Testis (tissue), 5 donors: ENCODE measurements at regions of chr18 and their contacts with region 1.

Region 1: DNA sequence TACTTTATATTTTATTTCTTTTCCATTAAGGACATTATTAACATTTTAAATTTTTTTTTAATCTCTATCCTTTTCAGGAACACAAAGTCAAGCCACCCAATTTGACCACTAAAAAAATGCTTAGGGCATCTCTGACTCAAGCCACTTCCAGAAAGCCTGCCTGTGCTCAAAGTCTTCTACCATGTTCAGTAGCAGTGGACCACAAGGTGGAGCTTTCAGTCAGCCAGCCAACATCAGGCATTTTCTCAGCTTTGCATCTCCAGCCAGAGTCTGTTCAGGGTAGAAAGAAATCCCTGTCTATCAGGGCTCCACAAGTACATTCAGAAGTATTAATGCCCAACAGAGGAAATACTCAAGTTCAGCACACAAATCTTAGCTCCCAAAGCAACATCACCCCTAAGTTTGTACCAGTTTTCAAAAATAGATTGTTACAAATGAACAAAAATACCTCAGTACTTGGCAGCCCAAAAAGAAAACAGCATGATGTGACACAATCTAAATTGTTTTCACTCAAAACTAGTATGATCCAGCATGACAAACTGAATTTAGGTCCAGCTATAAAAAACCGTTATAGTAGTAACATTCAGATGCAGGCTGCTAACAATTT is 37.6 kb downstream of the C18orf63 start:
- DNase-seq: peak; percentile 87
- H3K4me3 ChIP-seq: no peak overlapping the region
- H3K27ac ChIP-seq: no peak overlapping the region
- H3K4me1 ChIP-seq: no peaks in the 10 kb centered on the region
- H3K27me3 ChIP-seq: no peaks in the 10 kb centered on the region
- CTCF ChIP-seq: peak; percentile 46 to 73 (median 64)
- POLR2A ChIP-seq: no peak

Region 2: DNA sequence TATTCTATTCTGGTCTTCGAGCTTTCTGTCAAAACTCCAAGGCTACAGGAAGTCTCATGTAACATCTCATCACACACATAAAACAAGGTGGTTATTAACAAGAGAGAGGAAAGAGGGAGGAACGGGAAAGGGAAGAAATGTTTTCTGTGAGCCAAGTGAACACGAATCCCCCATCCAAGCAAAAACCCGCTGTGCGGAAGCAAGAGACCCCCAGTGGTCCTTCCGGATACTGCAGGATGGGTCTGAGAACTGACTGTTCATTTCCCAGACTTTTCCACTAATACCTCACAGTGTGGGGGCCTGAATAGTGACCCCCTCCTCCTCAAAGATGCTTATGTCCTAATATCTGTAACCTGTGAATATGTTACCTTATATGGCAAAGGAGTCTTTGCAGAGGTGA is 122.9 kb after region 1 on chr18:
- intact Hi-C with region 1: loop called (anchors 10 kb)
- DNase-seq: peak; percentile 67
- H3K4me3 ChIP-seq: no peak overlapping the region
- H3K27ac ChIP-seq: no peak overlapping the region
- H3K4me1 ChIP-seq: peaks cover 8% of the 10 kb centered on the region
- H3K27me3 ChIP-seq: no peaks in the 10 kb centered on the region
- CTCF ChIP-seq: peak in 2 of 3 experiments; percentile 61 to 64
- POLR2A ChIP-seq: no peak

Region 3: DNA sequence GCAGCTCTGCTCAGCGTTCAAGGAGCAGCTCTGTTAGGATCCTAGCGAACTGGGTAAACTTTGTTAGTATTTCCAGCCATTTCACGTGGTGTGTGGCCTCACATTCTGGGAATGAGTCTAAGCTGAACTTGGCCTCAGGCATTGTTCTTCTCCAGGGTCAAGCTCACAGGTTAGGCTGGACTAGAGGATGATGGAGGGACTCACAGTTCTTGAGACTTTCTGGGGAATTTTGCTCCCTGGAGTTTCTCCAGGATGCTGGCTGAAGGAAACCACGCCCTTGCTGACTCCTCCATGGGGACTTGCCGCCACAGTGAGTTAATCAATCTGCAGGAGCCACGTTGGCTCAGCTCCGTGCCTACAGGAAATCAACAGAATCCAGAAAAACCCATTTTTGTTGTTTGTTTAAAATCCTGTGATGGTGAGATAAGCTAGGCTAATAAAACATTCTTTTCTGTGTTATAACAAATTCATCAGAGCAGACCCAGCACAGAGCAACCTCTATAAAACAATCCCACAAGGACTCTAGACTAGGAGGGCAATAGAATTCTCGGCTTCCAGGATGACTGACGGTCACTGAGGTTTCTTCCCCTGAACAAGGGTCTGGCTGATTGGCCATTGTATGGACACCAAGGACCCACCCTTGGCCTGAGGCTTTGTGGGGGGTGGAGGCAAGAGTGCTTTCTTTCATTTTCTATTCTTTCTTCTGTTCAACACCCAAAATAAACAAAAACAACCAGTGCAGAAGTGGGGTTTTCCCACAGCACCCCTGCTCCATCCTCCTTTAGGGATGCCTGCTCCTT is 193.7 kb after region 1 on chr18:
- intact Hi-C with region 1: loop called (anchors 10 kb)
- DNase-seq: no peak
- H3K4me3 ChIP-seq: no peak overlapping the region
- H3K27ac ChIP-seq: peak overlapping the region in 1 of 2 donors; percentile 15
- H3K4me1 ChIP-seq: no peaks in the 10 kb centered on the region
- H3K27me3 ChIP-seq: no peaks in the 10 kb centered on the region
- CTCF ChIP-seq: no peak
- POLR2A ChIP-seq: no peak

Region 4: GRCh38 chr18:74778191-74778847 is 425.0 kb after region 1 on chr18:
- intact Hi-C with region 1: no loop called
- DNase-seq: no peak
- H3K4me3 ChIP-seq: no peak overlapping the region
- H3K27ac ChIP-seq: no peak overlapping the region
- H3K4me1 ChIP-seq: no peaks in the 10 kb centered on the region
- H3K27me3 ChIP-seq: no peaks in the 10 kb centered on the region
- CTCF ChIP-seq: no peak
- POLR2A ChIP-seq: no peak